Activated naive CD4-positive, alpha-beta T cell treated with anti-CD3 and anti-CD28 coated beads, Interleukin-2, amount 10 ng/mL, durations not matched to agents 7 days and 5 days (primary cell): ENCODE measurements at regions of chr18 and their contacts with region 1.

Region 1: GRCh38 chr18:58180738-58181353 is 136.8 kb downstream of the NEDD4L start:
- DNase-seq: peak; percentile 72
- H3K4me3 Mint-ChIP-seq: no peak overlapping the region
- H3K27ac Mint-ChIP-seq: no peak overlapping the region
- H3K4me1 Mint-ChIP-seq: no peaks in the 10 kb centered on the region
- H3K27me3 Mint-ChIP-seq: peaks cover 11% of the 10 kb centered on the region

Region 2: DNA sequence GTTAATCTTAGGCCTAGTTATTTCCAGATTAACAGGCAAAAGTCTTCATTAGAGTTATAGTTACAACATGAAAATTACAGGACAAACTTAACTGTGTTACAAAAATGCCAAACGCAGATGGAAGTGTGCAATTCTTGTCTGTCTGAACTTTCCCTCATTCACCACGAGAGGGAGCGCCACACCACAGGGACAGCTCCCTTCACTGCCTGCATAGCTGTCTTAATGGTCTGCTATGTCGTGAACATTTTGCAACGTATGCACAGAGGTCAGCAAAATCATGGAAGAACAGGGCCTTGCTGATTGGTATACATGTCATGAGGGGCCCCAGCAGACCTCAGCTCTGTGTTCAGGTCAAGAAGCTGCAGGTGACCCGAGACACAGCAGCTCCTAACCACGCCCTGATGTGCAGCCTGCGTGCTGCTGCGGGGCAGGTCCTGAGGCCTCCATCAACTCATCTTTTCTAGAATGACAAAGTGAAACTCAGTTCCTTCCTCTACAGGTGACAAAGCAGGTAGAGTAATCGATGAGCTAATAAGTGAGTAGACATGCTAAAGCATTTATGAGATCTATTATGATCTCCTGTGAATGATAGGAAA is 298.9 kb before region 1 on chr18:
- CTCF ChIA-PET with region 1: interaction called, 11 read pairs
- DNase-seq: peak; percentile 62
- H3K4me3 Mint-ChIP-seq: no peak overlapping the region
- H3K27ac Mint-ChIP-seq: no peak overlapping the region
- H3K4me1 Mint-ChIP-seq: no peaks in the 10 kb centered on the region
- H3K27me3 Mint-ChIP-seq: peaks cover 4% of the 10 kb centered on the region

Region 3: GRCh38 chr18:57898506-57899124 is 282.2 kb before region 1 on chr18:
- CTCF ChIA-PET with region 1: no interaction called
- DNase-seq: no peak
- H3K4me3 Mint-ChIP-seq: no peak overlapping the region
- H3K27ac Mint-ChIP-seq: no peak overlapping the region
- H3K4me1 Mint-ChIP-seq: no peaks in the 10 kb centered on the region
- H3K27me3 Mint-ChIP-seq: no peaks in the 10 kb centered on the region

Region 4: DNA sequence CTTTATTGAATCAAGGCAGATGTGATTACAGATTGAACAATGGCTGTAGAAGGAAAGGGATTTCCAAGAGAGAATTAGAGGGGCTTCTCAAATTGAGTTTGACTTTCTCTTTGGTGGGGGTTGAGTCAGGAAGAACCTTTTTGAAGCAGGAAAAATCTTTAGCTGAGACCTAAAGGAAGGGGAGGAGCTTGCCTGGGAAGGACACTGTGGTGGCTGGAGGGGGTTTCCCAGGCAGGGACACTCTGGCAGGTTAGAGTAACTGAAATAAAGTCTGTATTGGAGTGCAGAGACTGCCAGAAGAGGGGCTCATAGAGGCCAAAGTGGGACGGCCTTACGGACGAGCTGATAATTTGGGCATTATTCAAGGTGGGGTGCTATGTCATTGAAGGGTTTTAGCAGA is 67.5 kb before region 1 on chr18:
- CTCF ChIA-PET with region 1: no interaction called
- DNase-seq: no peak
- H3K4me3 Mint-ChIP-seq: no peak overlapping the region
- H3K27ac Mint-ChIP-seq: no peak overlapping the region
- H3K4me1 Mint-ChIP-seq: peaks cover 7% of the 10 kb centered on the region
- H3K27me3 Mint-ChIP-seq: peaks cover 21% of the 10 kb centered on the region

Region 5: DNA sequence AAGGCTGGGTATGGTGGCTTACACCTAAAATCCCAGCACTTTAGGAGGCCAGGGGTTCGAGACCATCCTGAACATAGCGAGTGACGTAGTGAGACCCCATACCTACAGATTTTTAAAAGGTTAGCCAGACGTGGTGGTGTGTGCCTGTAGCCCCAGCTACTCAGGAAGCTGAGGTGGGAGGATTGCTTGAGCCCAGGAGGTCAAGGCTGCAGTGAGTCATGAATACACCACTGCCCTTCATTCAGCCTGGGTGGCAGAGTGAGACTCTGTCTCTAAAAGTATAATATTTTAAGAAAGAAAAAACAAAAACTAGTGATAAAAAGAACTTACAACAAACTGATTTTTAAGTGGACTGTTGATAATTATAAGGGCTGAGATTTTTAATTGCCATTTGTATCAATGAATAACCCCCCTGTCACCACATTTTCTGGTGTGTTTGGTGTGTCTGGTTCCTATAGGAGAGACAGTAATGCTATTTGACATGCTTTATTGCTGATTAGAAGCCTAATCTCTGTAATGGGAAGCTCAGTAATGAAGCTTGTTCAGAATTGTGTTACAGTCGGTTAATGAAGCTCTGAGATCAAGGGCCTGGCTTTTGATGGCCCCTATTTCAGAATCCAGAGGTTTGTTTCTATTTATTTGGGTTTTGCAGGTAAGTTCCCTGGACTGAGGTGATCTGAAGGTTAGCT is 10.1 kb after region 1 on chr18:
- CTCF ChIA-PET with region 1: interaction called, 14 read pairs
- DNase-seq: no peak
- H3K4me3 Mint-ChIP-seq: no peak overlapping the region
- H3K27ac Mint-ChIP-seq: no peak overlapping the region
- H3K4me1 Mint-ChIP-seq: peaks cover 14% of the 10 kb centered on the region
- H3K27me3 Mint-ChIP-seq: peaks cover 29% of the 10 kb centered on the region

Region 6: GRCh38 chr18:58241877-58242276 is 61.0 kb after region 1 on chr18:
- CTCF ChIA-PET with region 1: no interaction called
- DNase-seq: no peak
- H3K4me3 Mint-ChIP-seq: no peak overlapping the region
- H3K27ac Mint-ChIP-seq: no peak overlapping the region
- H3K4me1 Mint-ChIP-seq: no peaks in the 10 kb centered on the region
- H3K27me3 Mint-ChIP-seq: no peaks in the 10 kb centered on the region